ENCODE measurements at regions of chr11 and their contacts with region 1.

Region 1: GRCh38 chr11:118401151-118401878 is at the start of gene ATP5MG:
- DNase-seq: peak; percentile 97
- H3K4me3 ChIP-seq: peak within 1 kb of the TSS; percentile 78
- H3K27ac ChIP-seq: peak within 1 kb of the TSS; percentile 89
- H3K4me1 ChIP-seq: peaks cover 16% of the 10 kb centered on the region
- H3K27me3 ChIP-seq: no peaks in the 10 kb centered on the region
- CTCF ChIP-seq: 0 out of 2 replicates have a peak, but pooled peaks have one; percentile 16
- total RNA-seq, gene ATP5MG: 303 and 334 TPM in 2 replicates

Region 2: GRCh38 chr11:118098996-118099837 is 302.1 kb before region 1 on chr11:
- CTCF ChIA-PET with region 1: no interaction called
- POLR2A ChIA-PET with region 1: no interaction called
- intact Hi-C with region 1: no loop called
- DNase-seq: no peak
- H3K4me3 ChIP-seq: no peak overlapping the region
- H3K27ac ChIP-seq: no peak overlapping the region
- H3K4me1 ChIP-seq: no peaks in the 10 kb centered on the region
- H3K27me3 ChIP-seq: peaks cover 44% of the 10 kb centered on the region
- CTCF ChIP-seq: no peak

Region 3: GRCh38 chr11:118427707-118428106 is 26.4 kb after region 1 on chr11:
- CTCF ChIA-PET with region 1: no interaction called
- POLR2A ChIA-PET with region 1: interaction called, 14 read pairs
- intact Hi-C with region 1: no loop called
- DNase-seq: no peak
- H3K4me3 ChIP-seq: no peak overlapping the region
- H3K27ac ChIP-seq: no peak overlapping the region
- H3K4me1 ChIP-seq: peaks cover 5% of the 10 kb centered on the region
- H3K27me3 ChIP-seq: no peaks in the 10 kb centered on the region
- CTCF ChIP-seq: no peak

Region 4: DNA sequence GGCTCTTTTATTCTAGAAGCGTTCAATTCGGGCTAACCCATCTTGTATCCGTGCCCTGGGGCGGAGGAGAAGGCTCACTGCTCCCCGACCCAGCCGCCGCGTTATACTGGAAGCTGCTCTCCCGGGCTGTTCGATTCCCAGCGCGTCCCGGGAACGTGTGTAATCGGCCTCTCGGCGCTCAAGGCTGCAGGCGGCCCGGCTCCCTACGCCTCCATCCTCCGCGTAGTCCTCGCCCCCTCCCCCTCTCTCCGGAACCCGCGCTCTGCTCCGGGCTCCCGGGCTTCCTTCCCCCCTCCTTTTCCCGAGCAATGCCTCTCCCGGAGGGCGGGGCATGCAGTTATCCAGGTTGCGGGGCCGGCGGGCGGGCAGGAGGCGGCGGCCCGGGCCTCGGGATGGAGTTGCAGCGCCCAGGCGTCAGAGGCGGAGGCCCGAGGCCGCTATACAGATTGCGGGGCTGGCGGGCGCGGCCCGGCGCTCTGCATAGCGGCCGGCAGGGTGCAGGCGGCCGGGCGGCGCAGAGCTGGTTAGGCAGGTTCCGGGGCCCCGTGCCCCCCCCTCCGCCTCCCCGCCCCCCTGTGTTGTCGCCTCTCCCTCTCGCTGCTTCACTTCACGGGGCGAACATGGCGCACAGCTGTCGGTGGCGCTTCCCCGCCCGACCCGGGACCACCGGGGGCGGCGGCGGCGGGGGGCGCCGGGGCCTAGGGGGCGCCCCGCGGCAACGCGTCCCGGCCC is 34.7 kb after region 1 on chr11 and contains the start of gene KMT2A:
- CTCF ChIA-PET with region 1: interaction called, 3 read pairs
- POLR2A ChIA-PET with region 1: no interaction called
- intact Hi-C with region 1: loop called (anchors 1 kb)
- DNase-seq: peak; percentile 100
- H3K4me3 ChIP-seq: peak within 1 kb of the TSS; percentile 93
- H3K27ac ChIP-seq: peak within 1 kb of the TSS; percentile 87
- H3K4me1 ChIP-seq: peaks cover 38% of the 10 kb centered on the region
- H3K27me3 ChIP-seq: no peaks in the 10 kb centered on the region
- CTCF ChIP-seq: no peak
- total RNA-seq, gene KMT2A: 116 and 121 TPM in 2 replicates

Measured in A673 (cell line).